ENCODE measurements at regions of chr2 and their contacts with region 1.

Region 1: DNA sequence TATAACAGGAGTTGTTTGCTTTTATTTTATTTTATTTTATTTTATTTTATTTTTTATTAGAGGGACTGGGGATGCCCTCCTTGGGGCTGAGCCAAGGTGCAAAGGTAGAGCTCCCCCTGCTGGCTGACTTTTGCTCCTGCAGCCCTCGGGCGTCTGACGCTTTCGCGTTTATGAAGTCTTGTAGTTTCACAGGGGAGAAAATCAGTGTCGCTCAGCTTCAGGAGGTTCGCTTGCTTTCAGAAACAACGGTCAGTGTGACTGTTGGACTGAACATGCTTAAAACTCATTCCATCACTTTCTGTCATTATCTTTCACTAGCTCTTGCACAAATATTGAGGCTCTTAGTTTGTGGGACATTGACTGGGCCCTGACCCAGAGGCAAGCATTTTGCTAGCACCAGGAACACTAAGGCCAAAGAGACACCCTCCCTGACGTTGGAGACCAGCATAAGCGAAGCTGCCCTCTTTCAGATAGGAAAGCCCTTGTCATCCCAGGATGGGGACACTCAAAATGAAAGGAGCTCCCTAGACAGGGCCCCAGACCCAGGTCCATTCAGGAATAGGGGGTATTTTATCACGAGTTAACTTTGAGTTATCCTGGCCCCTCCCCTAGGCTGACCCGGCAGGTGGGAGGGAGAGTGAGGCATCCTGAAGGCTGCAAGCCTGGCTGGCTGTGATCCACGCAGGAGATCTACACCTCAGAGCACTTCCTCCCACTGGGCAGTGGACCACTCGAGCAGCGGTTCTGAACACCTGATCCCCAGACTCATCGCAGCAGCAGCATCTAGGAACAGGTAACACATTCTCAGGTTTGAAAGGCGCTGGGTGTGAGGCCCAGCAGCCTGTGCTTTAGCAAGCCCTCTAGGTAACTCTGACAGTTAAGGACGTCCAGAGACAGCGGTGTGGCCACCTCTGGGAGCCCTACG is 34.4 kb downstream of the LGALSL start:
- DNase-seq: peak; percentile 85
- H3K4me3 Mint-ChIP-seq: no peak overlapping the region
- H3K27ac Mint-ChIP-seq: no peak overlapping the region
- H3K4me1 Mint-ChIP-seq: peaks cover 10% of the 10 kb centered on the region
- H3K27me3 Mint-ChIP-seq: peaks cover under 1% of the 10 kb centered on the region

Region 2: GRCh38 chr2:64337314-64337713 is 151.0 kb before region 1 on chr2:
- CTCF ChIA-PET with region 1: interaction called, 368 read pairs
- POLR2A ChIA-PET with region 1: no interaction called
- intact Hi-C with region 1: no loop called
- DNase-seq: no peak
- H3K4me3 Mint-ChIP-seq: no peak overlapping the region
- H3K27ac Mint-ChIP-seq: no peak overlapping the region
- H3K4me1 Mint-ChIP-seq: no peaks in the 10 kb centered on the region
- H3K27me3 Mint-ChIP-seq: peaks cover 5% of the 10 kb centered on the region

Region 3: DNA sequence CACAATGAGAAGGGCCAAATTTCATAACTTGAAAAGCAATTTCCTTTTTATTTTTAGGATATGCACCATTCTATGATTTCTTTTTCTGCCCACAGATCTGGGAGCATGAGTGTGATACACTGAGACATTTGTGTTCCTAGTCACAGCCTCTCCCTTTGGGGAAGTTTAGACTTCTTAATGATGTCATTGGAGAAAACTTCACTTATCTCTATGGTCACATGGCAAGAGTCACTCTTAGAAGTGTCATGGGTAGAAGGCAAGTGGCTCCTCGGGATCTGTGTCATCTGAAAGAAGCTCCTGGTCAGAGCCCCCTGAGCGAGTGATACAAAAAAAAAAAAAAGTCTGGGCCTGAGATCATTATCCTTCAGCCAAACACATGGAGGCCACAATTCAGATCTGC is 96.9 kb before region 1 on chr2:
- CTCF ChIA-PET with region 1: interaction called, 3 read pairs
- POLR2A ChIA-PET with region 1: no interaction called
- intact Hi-C with region 1: loop called (anchors 5 kb)
- DNase-seq: no peak
- H3K4me3 Mint-ChIP-seq: no peak overlapping the region
- H3K27ac Mint-ChIP-seq: no peak overlapping the region
- H3K4me1 Mint-ChIP-seq: no peaks in the 10 kb centered on the region
- H3K27me3 Mint-ChIP-seq: peaks cover 3% of the 10 kb centered on the region

Region 4: GRCh38 chr2:64437883-64438282 is 50.4 kb before region 1 on chr2:
- CTCF ChIA-PET with region 1: no interaction called
- POLR2A ChIA-PET with region 1: no interaction called
- intact Hi-C with region 1: no loop called
- DNase-seq: no peak
- H3K4me3 Mint-ChIP-seq: no peak overlapping the region
- H3K27ac Mint-ChIP-seq: no peak overlapping the region
- H3K4me1 Mint-ChIP-seq: no peaks in the 10 kb centered on the region
- H3K27me3 Mint-ChIP-seq: peaks cover 21% of the 10 kb centered on the region

Region 5: GRCh38 chr2:64516628-64517510 is 28.6 kb after region 1 on chr2:
- CTCF ChIA-PET with region 1: interaction called, 10 read pairs
- POLR2A ChIA-PET with region 1: no interaction called
- intact Hi-C with region 1: no loop called
- DNase-seq: no peak
- H3K4me3 Mint-ChIP-seq: no peak overlapping the region
- H3K27ac Mint-ChIP-seq: no peak overlapping the region
- H3K4me1 Mint-ChIP-seq: no peaks in the 10 kb centered on the region
- H3K27me3 Mint-ChIP-seq: no peaks in the 10 kb centered on the region

Region 6: GRCh38 chr2:65240657-65241056 is 752.3 kb after region 1 on chr2:
- CTCF ChIA-PET with region 1: no interaction called
- POLR2A ChIA-PET with region 1: no interaction called
- intact Hi-C with region 1: no loop called
- DNase-seq: no peak
- H3K4me3 Mint-ChIP-seq: no peak overlapping the region
- H3K27ac Mint-ChIP-seq: no peak overlapping the region
- H3K4me1 Mint-ChIP-seq: peaks cover 31% of the 10 kb centered on the region
- H3K27me3 Mint-ChIP-seq: no peaks in the 10 kb centered on the region